ENCODE measurements at regions of chr20 and their contacts with region 1.

Region 1: GRCh38 chr20:23361598-23362384 is at the start of gene GZF1:
- DNase-seq: peak in 1 of 2 donors; percentile 99
- H3K4me3 ChIP-seq: peak within 1 kb of the TSS; percentile 73 to 76
- H3K27ac ChIP-seq: peak within 1 kb of the TSS; percentile 97
- H3K4me1 ChIP-seq: peaks cover 53% of the 10 kb centered on the region
- H3K27me3 ChIP-seq: no peaks in the 10 kb centered on the region
- CTCF ChIP-seq: no peak
- POLR2A ChIP-seq: peak in 1 of 2 donors; percentile 91
- total RNA-seq, gene GZF1: 20.9 TPM

Region 2: DNA sequence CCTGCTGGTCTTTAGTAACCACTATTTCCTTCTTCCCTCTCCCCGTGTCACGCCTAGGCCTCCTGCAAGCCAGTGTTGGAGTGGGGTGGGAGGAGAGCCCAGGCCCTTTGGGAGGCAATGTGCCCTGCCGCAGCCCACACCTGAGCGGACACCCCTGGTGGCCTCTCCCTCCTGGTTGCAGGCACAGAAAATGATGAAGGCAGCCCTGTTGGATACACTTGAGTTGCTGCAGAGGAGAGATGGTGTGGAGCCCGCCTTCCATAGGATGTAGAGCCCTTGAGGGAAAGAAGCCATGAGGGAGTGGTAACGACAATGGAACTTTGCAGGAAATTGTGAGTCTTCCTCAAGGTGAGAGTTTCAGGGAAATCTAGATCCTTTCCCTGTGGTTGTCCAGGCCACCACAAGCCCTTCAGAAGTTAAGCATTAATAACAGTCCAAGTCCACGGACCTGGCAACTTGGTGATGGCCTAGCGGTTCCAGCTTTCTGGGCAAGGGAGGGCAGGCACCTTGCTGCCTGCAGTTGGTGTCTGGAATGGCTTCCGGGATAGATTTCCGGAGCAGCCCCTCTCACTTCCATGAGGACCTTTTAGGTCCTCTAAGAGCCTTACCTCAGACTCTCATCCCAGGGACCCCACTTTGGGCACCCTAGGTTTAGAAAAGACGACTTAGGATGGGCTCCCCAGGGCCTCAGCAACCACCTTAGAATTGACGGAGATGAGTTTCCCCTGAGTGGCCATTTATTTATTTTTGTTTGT is 78.5 kb before region 1 on chr20:
- intact Hi-C with region 1: no loop called
- DNase-seq: no peak
- H3K4me3 ChIP-seq: no peak overlapping the region
- H3K27ac ChIP-seq: no peak overlapping the region
- H3K4me1 ChIP-seq: no peaks in the 10 kb centered on the region
- H3K27me3 ChIP-seq: no peaks in the 10 kb centered on the region
- CTCF ChIP-seq: no peak
- POLR2A ChIP-seq: no peak

Region 3: GRCh38 chr20:23420943-23421931 is 59.4 kb after region 1 on chr20 and contains the start of gene NAPB:
- intact Hi-C with region 1: loop called (anchors 5 kb)
- DNase-seq: peak in 1 of 2 donors; percentile 89
- H3K4me3 ChIP-seq: peak within 1 kb of the TSS; percentile 89 to 98
- H3K27ac ChIP-seq: peak within 1 kb of the TSS; percentile 97
- H3K4me1 ChIP-seq: peaks cover 34% of the 10 kb centered on the region
- H3K27me3 ChIP-seq: no peaks in the 10 kb centered on the region
- CTCF ChIP-seq: peak in 1 of 3 experiments; percentile 78
- POLR2A ChIP-seq: peak in 1 of 2 donors; percentile 85
- total RNA-seq, gene NAPB: 28.5 TPM

Region 4: GRCh38 chr20:23622839-23623343 is 261.1 kb after region 1 on chr20:
- intact Hi-C with region 1: loop called (anchors 5 kb)
- DNase-seq: peak in 1 of 2 donors; percentile 95
- H3K4me3 ChIP-seq: peak overlapping the region; percentile 29 to 41
- H3K27ac ChIP-seq: peak overlapping the region; percentile 87
- H3K4me1 ChIP-seq: peaks cover 33% of the 10 kb centered on the region
- H3K27me3 ChIP-seq: no peaks in the 10 kb centered on the region
- CTCF ChIP-seq: no peak
- POLR2A ChIP-seq: no peak

Region 5: DNA sequence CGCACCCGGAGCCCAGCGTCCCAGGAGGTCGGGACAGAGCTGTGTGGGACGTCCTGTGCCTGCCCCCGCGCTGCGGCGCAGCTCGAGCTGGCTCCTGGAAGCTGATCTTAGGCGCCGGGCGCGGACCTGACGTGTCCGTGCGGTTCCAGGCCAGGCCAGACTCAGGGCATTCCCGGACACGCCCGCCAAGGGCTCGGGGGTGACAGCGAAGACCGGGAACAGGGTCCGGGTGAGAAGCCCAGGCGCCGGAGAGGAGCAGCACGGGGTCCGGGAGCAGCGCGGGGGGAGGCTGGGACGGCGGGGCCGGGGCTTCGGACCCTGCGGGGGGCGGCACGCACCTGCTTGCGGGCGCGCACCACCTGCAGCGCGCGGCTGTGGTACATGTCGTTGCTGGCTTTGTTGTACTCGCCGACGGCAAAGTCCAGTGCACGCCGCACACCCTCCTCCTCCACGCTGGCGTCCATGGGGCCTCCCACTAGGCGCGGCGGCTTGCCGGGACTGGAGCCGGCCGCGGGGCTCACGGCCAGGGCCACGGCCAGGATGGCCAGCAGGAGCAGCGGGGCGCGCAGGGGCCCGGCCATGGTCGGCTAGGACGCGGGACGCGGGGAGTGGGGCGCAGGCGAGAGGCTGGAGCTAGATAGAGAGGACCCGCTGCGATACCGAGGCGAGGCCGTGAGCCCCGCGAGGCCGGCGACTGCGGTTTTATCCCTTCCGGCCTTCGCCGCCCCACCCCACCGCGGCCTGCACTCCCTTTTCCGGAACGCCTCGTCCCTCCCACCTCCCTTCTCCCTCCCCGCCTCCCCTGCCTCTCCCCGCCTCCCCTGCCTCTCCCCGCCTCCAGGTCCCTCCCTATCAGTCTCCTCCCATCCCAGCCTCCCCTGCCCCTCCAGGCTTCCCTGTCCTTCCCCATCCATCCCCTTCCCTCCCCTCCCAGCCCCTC is 275.8 kb after region 1 on chr20 and contains the start of gene CST3:
- intact Hi-C with region 1: loop called (anchors 5 kb)
- DNase-seq: peak in 1 of 2 donors; percentile 94
- H3K4me3 ChIP-seq: peak within 1 kb of the TSS; percentile 81 to 95
- H3K27ac ChIP-seq: peak within 1 kb of the TSS; percentile 89
- H3K4me1 ChIP-seq: peaks cover 40% of the 10 kb centered on the region
- H3K27me3 ChIP-seq: no peaks in the 10 kb centered on the region
- CTCF ChIP-seq: no peak
- POLR2A ChIP-seq: peak in 1 of 2 donors; percentile 88
- total RNA-seq, gene CST3: 1,106 TPM